BJ (cell line): ENCODE measurements at regions of chr10 and their contacts with region 1.

Region 1: DNA sequence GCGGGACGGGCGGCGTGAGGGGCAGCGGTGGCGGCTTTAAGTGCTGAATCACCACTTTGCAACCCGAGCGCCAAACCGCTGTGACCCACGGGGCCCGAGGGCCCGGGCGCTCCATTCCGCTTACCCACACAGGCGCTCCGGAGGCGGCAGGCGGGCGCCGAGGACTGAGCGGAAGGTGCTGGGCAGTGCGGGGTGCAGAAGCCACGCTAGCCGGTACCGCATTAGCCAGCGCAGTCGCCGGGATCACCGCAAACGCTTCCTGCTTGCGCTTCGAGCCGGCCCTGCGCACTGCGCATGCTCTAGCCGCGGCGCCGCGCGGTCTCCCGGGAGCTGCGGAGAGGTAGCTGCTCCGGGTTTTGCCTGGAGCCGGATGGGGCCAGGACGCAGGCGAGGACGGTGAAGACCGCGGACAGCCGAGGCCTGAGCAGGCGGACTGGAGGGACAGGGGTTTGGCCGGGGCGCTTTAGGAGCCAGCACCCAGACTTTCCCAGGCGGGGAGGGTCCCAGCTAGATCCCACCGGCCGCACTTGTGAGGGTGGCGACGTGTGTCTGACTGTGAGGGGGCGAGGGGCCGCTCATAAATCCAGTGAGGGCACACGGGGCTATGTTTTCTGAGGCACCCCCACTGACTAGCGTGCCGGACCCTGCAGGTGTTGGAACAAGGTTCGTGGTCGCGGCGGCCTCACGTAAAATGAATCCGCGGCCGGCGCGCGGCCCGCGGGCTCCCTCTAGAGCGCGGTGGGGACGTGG is at the start of gene IDE:
- DNase-seq: no peak
- H3K4me3 ChIP-seq: peak within 1 kb of the TSS; percentile 79
- H3K27me3 ChIP-seq: no peaks in the 10 kb centered on the region
- CTCF ChIP-seq: peak; percentile 98
- polyA plus RNA-seq, gene IDE: 15.1 and 30.7 TPM in 2 replicates

Region 2: DNA sequence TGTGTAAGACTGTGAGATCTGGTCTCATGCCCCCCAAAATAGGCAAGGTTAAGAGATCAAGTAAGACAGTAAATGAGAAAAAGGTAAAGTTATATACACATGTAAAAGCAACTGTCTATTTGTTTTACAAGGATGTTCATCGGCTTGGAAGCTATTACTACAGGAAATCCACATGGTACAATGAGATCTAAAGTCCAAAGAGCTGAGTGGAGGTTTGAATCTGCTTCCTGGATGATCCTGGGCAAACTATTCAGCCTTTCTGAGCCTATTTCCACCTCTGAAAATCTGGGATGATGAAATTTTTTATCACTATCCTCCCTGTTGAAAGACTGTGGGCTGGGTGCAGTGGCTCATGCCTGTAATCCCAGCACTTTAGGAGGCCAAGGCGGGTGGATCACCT is 123.1 kb before region 1 on chr10:
- CTCF ChIA-PET with region 1: no interaction called
- POLR2A ChIA-PET with region 1: no interaction called
- DNase-seq: no peak
- H3K4me3 ChIP-seq: no peak overlapping the region
- H3K27me3 ChIP-seq: no peaks in the 10 kb centered on the region
- CTCF ChIP-seq: no peak

Region 3: DNA sequence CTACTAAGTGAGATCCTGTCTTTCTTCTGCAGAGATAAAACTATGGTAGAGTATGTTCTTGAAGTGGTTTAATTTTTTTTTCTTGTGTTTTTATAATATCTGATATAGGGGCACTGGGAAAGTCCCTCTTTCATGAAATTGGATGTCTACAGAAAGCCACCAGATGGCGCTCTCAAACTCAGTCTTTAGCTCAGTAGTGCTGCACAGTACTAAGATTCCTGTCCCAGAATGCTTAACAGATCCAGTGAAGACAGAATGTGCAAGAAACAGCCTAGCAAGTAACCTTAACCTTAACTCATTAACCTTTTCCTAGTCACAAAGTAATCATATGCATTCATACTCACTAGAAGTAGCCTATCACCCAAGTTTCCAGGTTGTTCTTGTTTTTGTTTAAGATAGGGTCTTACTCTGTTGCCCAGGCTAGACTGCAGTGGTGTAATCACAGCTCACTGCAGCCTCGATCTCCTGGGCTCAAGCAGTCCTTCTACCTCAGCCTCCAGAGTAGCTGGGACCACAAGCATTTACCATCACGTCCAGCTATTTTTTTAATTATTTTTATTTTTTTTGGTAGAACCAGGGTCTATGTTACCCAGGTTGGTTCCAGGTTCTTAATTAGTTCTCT is 56.8 kb before region 1 on chr10:
- CTCF ChIA-PET with region 1: interaction called, 57 read pairs
- POLR2A ChIA-PET with region 1: interaction called, 3 read pairs
- DNase-seq: peak; percentile 9
- H3K4me3 ChIP-seq: no peak overlapping the region
- H3K27me3 ChIP-seq: no peaks in the 10 kb centered on the region
- CTCF ChIP-seq: peak; percentile 70

Region 4: DNA sequence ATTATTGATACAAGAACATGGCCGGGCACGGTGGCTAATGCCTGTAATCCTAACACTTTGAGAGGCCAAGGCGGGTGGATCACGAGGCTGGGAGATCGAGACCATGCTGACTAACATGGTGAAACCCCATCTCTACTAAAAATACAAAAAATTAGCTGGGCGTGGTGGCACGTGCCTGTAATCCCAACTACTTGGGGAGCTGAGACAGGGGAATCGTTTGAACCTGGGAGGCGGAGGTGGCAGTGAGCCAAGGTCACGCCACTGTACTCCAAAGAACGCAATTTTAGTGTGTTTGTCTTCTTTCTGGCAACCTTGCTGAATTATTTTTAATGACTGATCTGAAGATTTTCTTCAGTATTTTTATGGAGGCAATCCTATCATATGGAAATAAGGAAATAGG is 46.3 kb before region 1 on chr10:
- CTCF ChIA-PET with region 1: interaction called, 40 read pairs
- POLR2A ChIA-PET with region 1: no interaction called
- DNase-seq: no peak
- H3K4me3 ChIP-seq: no peak overlapping the region
- H3K27me3 ChIP-seq: no peaks in the 10 kb centered on the region
- CTCF ChIP-seq: no peak

Region 5: DNA sequence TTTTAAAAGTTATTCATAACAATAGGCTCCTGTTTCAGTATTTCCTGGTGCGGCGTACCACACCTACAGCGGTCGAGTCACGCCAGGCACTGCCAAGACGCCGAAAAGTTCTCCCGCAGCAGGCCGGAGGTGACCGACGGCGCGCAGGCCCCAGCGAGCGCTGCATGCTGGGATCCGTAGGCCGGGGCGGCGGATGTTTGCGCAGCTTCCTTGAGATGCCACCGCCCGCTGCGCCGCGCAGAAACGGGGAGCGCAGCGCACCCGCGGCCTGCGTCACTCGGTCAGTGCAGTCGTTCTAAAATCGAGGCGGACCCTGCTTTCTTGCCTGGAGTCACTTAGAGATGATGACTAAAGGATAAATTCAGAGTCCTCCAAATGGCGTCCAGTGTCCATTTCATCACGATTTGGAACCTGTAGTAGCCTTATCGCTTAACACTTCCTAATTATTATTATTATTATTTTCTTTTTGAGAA is 17.6 kb after region 1 on chr10:
- CTCF ChIA-PET with region 1: interaction called, 14 read pairs
- POLR2A ChIA-PET with region 1: interaction called, 3 read pairs
- DNase-seq: peak; percentile 74
- H3K4me3 ChIP-seq: peak overlapping the region; percentile 86
- H3K27me3 ChIP-seq: no peaks in the 10 kb centered on the region
- CTCF ChIP-seq: no peak